ENCODE measurements at regions of chr7 and their contacts with region 1.

Region 1: GRCh38 chr7:21253740-21254687 is 173.9 kb upstream of the SP4 start:
- ATAC-seq: peak; percentile 81 to 100 (median 97)
- H3K4me3 ChIP-seq: peak overlapping the region in 3 of 5 donors; percentile 7 to 20 (median 7)
- H3K27ac ChIP-seq: no peak overlapping the region
- H3K4me1 ChIP-seq: peaks cover 34 to 49% of the 10 kb centered on the region in 2 donors

Region 2: DNA sequence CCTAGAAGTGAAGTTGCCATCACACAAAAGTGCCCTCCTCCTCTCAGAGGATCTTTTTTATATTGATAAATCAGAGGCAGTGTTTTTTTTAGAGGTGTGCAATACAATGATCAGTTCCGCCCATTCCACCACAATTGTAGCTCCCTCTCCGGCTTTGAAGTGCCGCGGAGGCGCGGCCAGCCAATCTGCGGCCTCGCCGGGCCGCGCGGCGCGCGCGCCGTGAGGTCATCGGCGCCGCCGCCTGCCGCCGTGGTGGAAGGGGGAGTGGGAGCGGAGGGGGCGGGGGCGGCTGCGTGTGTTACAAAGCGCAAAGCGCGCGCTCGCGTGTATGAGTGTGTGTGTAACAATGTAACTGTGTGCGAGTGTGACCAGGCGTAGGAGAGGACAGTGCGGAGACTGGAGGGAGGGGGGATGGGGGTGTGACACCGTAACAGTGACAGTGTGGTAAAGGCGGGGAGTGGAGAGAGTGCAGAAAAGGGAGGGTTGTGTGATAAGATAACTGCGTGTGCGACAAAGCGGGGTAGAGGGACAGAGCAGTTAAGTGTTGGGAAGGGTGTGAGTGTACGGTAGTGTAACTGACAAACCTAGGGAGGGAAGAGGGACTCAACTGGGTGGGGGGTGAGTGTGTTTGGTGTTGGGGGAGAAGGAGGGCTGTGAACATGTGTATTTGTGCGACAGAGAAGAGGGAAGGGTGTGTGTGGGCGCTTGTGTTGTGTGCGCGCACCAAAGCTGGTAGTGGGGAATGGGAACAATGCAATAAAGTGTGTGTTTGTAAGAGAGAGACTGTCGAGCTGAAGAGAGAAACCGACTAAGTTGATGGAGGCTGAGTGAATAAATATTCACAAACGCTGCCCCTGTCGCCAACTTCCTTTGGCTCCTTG is 467.0 kb before region 1 on chr7 and contains the start of gene SP8:
- in situ Hi-C with region 1: loop called in 7 of 9 experiments (anchors 10 to 25 kb)
- ATAC-seq: peak in 6 of 8 experiments; percentile 57 to 82 (median 74)
- H3K4me3 ChIP-seq: peak within 1 kb of the TSS; percentile 43 to 71 (median 52)
- H3K27ac ChIP-seq: peak within 1 kb of the TSS; percentile 87 to 89
- H3K4me1 ChIP-seq: peaks cover 22 to 42% of the 10 kb centered on the region in 2 donors
- total RNA-seq, gene SP8: 0.10 to 16.8 (median 4.2) TPM